ENCODE measurements at regions of chr3 and their contacts with region 1.

Region 1: GRCh38 chr3:22555753-22556435 is 647.2 kb upstream of the UBE2E2 start:
- DNase-seq: no peak
- H3K4me3 ChIP-seq: no peak overlapping the region
- H3K27ac ChIP-seq: no peak overlapping the region
- H3K4me1 ChIP-seq: no peaks in the 10 kb centered on the region
- H3K27me3 ChIP-seq: no peaks in the 10 kb centered on the region
- CTCF ChIP-seq: no peak
- EP300 ChIP-seq: no peak
- POLR2A ChIP-seq: no peak

Region 2: DNA sequence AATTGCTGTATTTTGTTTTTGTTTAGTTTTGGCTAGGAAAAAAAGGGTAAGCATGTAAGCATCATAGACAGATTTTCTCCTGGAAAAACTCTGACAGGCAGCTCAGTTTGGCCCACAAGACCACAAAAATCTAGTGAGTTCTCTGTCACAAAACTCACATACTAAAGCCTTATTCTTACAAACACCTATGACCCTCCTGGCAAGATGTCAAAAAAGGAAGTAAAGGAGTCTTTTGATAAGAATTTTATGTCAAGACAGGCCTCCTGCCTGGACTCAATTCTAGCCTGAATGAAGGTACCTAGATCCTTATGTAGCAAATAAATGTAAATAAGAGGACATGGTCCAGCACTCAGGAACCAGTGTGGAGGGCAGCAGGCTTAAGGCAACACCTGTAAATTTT is 136.6 kb before region 1 on chr3:
- intact Hi-C with region 1: no loop called
- DNase-seq: no peak
- H3K4me3 ChIP-seq: no peak overlapping the region
- H3K27ac ChIP-seq: no peak overlapping the region
- H3K4me1 ChIP-seq: no peaks in the 10 kb centered on the region
- H3K27me3 ChIP-seq: no peaks in the 10 kb centered on the region
- CTCF ChIP-seq: no peak
- EP300 ChIP-seq: no peak
- POLR2A ChIP-seq: no peak

Region 3: GRCh38 chr3:22469995-22470394 is 85.9 kb before region 1 on chr3:
- intact Hi-C with region 1: no loop called
- DNase-seq: no peak
- H3K4me3 ChIP-seq: no peak overlapping the region
- H3K27ac ChIP-seq: no peak overlapping the region
- H3K4me1 ChIP-seq: no peaks in the 10 kb centered on the region
- H3K27me3 ChIP-seq: no peaks in the 10 kb centered on the region
- CTCF ChIP-seq: no peak
- EP300 ChIP-seq: no peak
- POLR2A ChIP-seq: no peak

Region 4: GRCh38 chr3:22887664-22888291 is 331.9 kb after region 1 on chr3:
- intact Hi-C with region 1: loop called (anchors 5 kb)
- DNase-seq: no peak
- H3K4me3 ChIP-seq: no peak overlapping the region
- H3K27ac ChIP-seq: no peak overlapping the region
- H3K4me1 ChIP-seq: peaks cover 0 to 17% (median 15%) of the 10 kb centered on the region in 4 donors
- H3K27me3 ChIP-seq: no peaks in the 10 kb centered on the region
- CTCF ChIP-seq: peak in 3 of 4 experiments; percentile 28 to 50 (median 37)
- EP300 ChIP-seq: no peak
- POLR2A ChIP-seq: no peak